Activated CD4-positive, alpha-beta T cell treated with anti-CD3 and anti-CD28 coated beads for 36 hours (primary cell): ENCODE measurements at regions of chr5 and their contacts with region 1.

Region 1: DNA sequence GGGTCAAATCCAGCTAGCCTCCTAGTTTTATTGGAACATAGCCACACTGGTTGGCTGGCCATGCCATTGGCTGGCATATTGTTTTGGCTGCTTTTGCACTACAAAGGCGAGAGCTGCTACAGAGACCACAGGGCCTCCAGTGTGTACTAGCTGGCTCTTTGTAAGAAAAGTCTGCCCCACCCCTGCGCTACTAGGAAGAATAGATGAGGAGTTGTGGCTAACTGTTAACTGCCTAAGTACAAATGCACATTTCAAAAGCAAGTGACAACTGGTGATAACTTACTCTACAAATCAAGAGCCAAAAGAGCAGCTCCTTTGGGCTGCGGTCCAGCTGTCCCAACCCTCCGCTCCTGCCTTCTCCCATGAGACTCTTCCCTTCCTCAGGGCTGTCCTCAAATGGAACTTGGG is 63.9 kb downstream of the SERINC5 start:
- DNase-seq: peak; percentile 55
- ATAC-seq: peak; percentile 42
- H3K4me3 Mint-ChIP-seq: peak overlapping the region; percentile 47
- H3K27ac Mint-ChIP-seq: peak overlapping the region; percentile 99
- H3K4me1 Mint-ChIP-seq: peaks cover 84% of the 10 kb centered on the region
- H3K27me3 Mint-ChIP-seq: no peaks in the 10 kb centered on the region

Region 2: GRCh38 chr5:80141147-80141671 is 50.8 kb before region 1 on chr5:
- CTCF ChIA-PET with region 1: interaction called, 4 read pairs
- POLR2A ChIA-PET with region 1: no interaction called
- intact Hi-C with region 1: loop called in 1 of 2 experiments (anchors 5 kb)
- DNase-seq: no peak
- ATAC-seq: no peak
- H3K4me3 Mint-ChIP-seq: peak overlapping the region; percentile 12
- H3K27ac Mint-ChIP-seq: peak overlapping the region; percentile 94
- H3K4me1 Mint-ChIP-seq: peaks cover 80% of the 10 kb centered on the region
- H3K27me3 Mint-ChIP-seq: no peaks in the 10 kb centered on the region

Region 3: GRCh38 chr5:80231243-80231642 is 39.2 kb after region 1 on chr5:
- CTCF ChIA-PET with region 1: no interaction called
- POLR2A ChIA-PET with region 1: interaction called, 5 read pairs
- intact Hi-C with region 1: loop called in 1 of 2 experiments (anchors 2 kb)
- DNase-seq: no peak
- ATAC-seq: peak; percentile 34
- H3K4me3 Mint-ChIP-seq: no peak overlapping the region
- H3K27ac Mint-ChIP-seq: peak overlapping the region; percentile 53
- H3K4me1 Mint-ChIP-seq: peaks cover 71% of the 10 kb centered on the region
- H3K27me3 Mint-ChIP-seq: no peaks in the 10 kb centered on the region